ENCODE measurements at regions of chr6 and their contacts with region 1.

Region 1: DNA sequence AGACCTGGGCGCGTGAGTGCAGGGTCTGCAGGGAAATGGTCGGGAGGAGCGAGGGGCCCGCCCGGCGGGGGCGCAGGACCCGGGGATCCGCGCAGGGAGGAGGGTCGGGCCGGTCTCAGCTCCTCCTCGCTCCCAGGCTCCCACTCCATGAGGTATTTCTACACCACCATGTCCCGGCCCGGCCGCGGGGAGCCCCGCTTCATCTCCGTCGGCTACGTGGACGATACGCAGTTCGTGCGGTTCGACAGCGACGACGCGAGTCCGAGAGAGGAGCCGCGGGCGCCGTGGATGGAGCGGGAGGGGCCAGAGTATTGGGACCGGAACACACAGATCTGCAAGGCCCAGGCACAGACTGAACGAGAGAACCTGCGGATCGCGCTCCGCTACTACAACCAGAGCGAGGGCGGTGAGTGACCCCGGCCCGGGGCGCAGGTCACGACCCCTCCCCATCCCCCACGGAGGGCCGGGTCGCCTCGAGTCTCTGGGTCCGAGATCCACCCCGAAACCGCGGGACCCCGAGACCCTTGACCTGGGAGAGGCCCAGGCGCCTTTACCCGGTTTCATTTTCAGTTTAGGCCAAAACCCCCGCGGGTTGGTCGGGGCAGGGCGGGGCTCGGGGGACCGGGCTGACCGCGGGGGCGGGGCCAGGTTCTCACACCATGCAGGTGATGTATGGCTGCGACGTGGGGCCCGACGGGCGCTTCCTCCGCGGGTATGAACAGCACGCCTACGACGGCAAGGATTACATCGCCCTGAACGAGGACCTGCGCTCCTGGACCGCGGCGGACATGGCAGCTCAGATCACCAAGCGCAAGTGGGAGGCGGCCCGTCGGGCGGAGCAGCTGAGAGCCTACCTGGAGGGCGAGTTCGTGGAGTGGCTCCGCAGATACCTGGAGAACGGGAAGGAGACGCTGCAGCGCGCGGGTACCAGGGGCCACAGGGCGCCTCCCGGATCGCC is 54.2 kb upstream of the HLA-A start:
- DNase-seq: peak; percentile 22 to 66
- ATAC-seq: peak; percentile 83 to 92
- H3K4me3 ChIP-seq: peak overlapping the region in 3 of 4 donors; percentile 52 to 91 (median 59)
- H3K27ac ChIP-seq: peak overlapping the region in 3 of 4 donors; percentile 71 to 85 (median 75)
- H3K4me1 ChIP-seq: peaks cover 0 to 5% of the 10 kb centered on the region in 2 donors
- H3K27me3 ChIP-seq: peaks cover 0 to 12% (median 0%) of the 10 kb centered on the region in 3 donors
- CTCF ChIP-seq: no peak
- POLR2A ChIP-seq: no peak

Region 2: DNA sequence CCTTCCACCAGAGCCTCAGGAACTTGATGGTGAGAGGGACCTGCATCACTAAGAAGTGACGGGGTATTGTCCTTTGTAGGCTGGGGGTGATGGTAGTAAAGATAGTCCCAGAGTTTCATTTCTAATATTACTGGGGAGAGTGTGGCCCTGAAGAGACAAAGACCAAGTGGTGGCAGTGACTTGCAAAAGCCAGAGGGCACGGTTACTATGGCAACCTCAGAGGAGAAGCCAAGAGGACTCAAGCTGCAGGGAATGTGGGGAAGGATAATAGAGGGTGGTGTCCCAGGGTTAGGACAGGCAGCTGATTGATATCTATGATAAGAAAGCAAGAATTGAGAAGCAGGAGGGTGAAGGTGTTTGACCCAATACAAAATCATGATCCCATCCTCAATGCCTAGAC is 18.0 kb before region 1 on chr6:
- in situ Hi-C with region 1: no loop called
- intact Hi-C with region 1: no loop called
- DNase-seq: no peak
- ATAC-seq: no peak
- H3K4me3 ChIP-seq: no peak overlapping the region
- H3K27ac ChIP-seq: no peak overlapping the region
- H3K4me1 ChIP-seq: no peaks in the 10 kb centered on the region
- H3K27me3 ChIP-seq: peaks cover 0 to 8% (median 3%) of the 10 kb centered on the region in 3 donors
- CTCF ChIP-seq: no peak
- POLR2A ChIP-seq: no peak

Region 3: GRCh38 chr6:29942275-29943052 is 54.4 kb after region 1 on chr6 and contains the start of gene HLA-A:
- in situ Hi-C with region 1: loop called in 1 of 4 experiments (anchors 5 kb)
- intact Hi-C with region 1: loop called (anchors 1 kb)
- DNase-seq: peak; percentile 91 to 94
- ATAC-seq: peak; percentile 98 to 99
- H3K4me3 ChIP-seq: peak within 1 kb of the TSS; percentile 61 to 80 (median 66)
- H3K27ac ChIP-seq: peak within 1 kb of the TSS; percentile 81 to 88 (median 86)
- H3K4me1 ChIP-seq: peaks cover 0 to 5% of the 10 kb centered on the region in 2 donors
- H3K27me3 ChIP-seq: no peaks in the 10 kb centered on the region
- CTCF ChIP-seq: no peak
- POLR2A ChIP-seq: peak; percentile 76 to 90
- total RNA-seq, gene HLA-A: 149 to 161 (median 154) TPM

Region 4: GRCh38 chr6:30364591-30364990 is 476.5 kb after region 1 on chr6:
- in situ Hi-C with region 1: no loop called
- intact Hi-C with region 1: no loop called
- DNase-seq: no peak
- ATAC-seq: no peak
- H3K4me3 ChIP-seq: no peak overlapping the region
- H3K27ac ChIP-seq: no peak overlapping the region
- H3K4me1 ChIP-seq: no peaks in the 10 kb centered on the region
- H3K27me3 ChIP-seq: peaks cover 10 to 32% (median 22%) of the 10 kb centered on the region in 3 donors
- CTCF ChIP-seq: no peak
- POLR2A ChIP-seq: no peak

Measured in gastrocnemius medialis (tissue), 4 donors.